Gastrocnemius medialis (tissue), 4 donors: ENCODE measurements at regions of chr17 and their contacts with region 1.

Region 1: GRCh38 chr17:68172461-68172954 is 75.3 kb upstream of the AMZ2 start:
- DNase-seq: peak in 1 of 2 donors; percentile 64
- ATAC-seq: peak; percentile 67 to 87
- H3K4me3 ChIP-seq: no peak overlapping the region
- H3K27ac ChIP-seq: no peak overlapping the region
- H3K4me1 ChIP-seq: no peaks in the 10 kb centered on the region
- H3K27me3 ChIP-seq: no peaks in the 10 kb centered on the region
- CTCF ChIP-seq: peak; percentile 89 to 98 (median 96)
- POLR2A ChIP-seq: no peak

Region 2: GRCh38 chr17:68205251-68205807 is 32.8 kb after region 1 on chr17:
- in situ Hi-C with region 1: no loop called
- intact Hi-C with region 1: loop called (anchors 1 kb)
- DNase-seq: peak; percentile 87
- ATAC-seq: peak; percentile 88 to 90
- H3K4me3 ChIP-seq: peak overlapping the region; percentile 74 to 87 (median 76)
- H3K27ac ChIP-seq: peak overlapping the region; percentile 66 to 91 (median 78)
- H3K4me1 ChIP-seq: peaks cover 10 to 14% of the 10 kb centered on the region in 2 donors
- H3K27me3 ChIP-seq: peaks cover 0 to 2% (median 0%) of the 10 kb centered on the region in 3 donors
- CTCF ChIP-seq: peak; percentile 75 to 94 (median 90)
- POLR2A ChIP-seq: peak; percentile 61 to 68

Region 3: GRCh38 chr17:68468334-68468733 is 295.8 kb after region 1 on chr17:
- in situ Hi-C with region 1: loop called (anchors 5 to 10 kb)
- intact Hi-C with region 1: loop called (anchors 1 kb)
- DNase-seq: no peak
- ATAC-seq: peak in 1 of 2 donors; percentile 54
- H3K4me3 ChIP-seq: no peak overlapping the region
- H3K27ac ChIP-seq: peak overlapping the region in 3 of 4 donors; percentile 21 to 72 (median 55)
- H3K4me1 ChIP-seq: peaks cover 4 to 7% of the 10 kb centered on the region in 2 donors
- H3K27me3 ChIP-seq: no peaks in the 10 kb centered on the region
- CTCF ChIP-seq: no peak
- POLR2A ChIP-seq: peak in 1 of 2 donors; percentile 20